Gastrocnemius medialis (tissue), 4 donors: ENCODE measurements at regions of chr11 and their contacts with region 1.

Region 1: GRCh38 chr11:76680518-76681425 is 10.2 kb upstream of the LRRC32 start:
- DNase-seq: peak in 1 of 2 donors; percentile 27
- ATAC-seq: peak in 1 of 2 donors; percentile 42
- H3K4me3 ChIP-seq: no peak overlapping the region
- H3K27ac ChIP-seq: no peak overlapping the region
- H3K4me1 ChIP-seq: no peaks in the 10 kb centered on the region
- H3K27me3 ChIP-seq: no peaks in the 10 kb centered on the region
- CTCF ChIP-seq: peak; percentile 41 to 81 (median 73)
- POLR2A ChIP-seq: no peak

Region 2: GRCh38 chr11:76491656-76492055 is 189.1 kb before region 1 on chr11:
- in situ Hi-C with region 1: no loop called
- intact Hi-C with region 1: no loop called
- DNase-seq: no peak
- ATAC-seq: no peak
- H3K4me3 ChIP-seq: no peak overlapping the region
- H3K27ac ChIP-seq: no peak overlapping the region
- H3K4me1 ChIP-seq: no peaks in the 10 kb centered on the region
- H3K27me3 ChIP-seq: no peaks in the 10 kb centered on the region
- CTCF ChIP-seq: no peak
- POLR2A ChIP-seq: no peak

Region 3: DNA sequence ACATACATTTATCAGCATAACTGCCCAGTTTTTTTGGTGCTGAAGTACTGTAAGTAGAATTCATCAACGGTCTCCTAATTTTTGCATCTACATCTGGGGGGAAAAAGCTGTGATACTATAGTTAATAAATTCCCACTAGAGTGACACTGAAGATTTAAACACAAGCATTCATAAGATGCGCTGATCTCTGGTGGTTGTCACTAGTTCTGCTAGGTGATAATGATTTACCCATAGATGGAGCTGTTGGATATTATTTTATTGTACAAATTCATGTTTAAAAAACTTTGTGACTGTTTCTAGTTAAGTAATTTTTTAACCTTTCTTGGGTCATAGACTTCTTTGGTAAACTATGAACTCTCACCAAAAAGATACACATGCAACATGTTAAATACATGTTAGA is 129.4 kb before region 1 on chr11:
- in situ Hi-C with region 1: loop called in 1 of 4 experiments (anchors 10 kb)
- intact Hi-C with region 1: loop called (anchors 5 kb)
- DNase-seq: no peak
- ATAC-seq: no peak
- H3K4me3 ChIP-seq: no peak overlapping the region
- H3K27ac ChIP-seq: no peak overlapping the region
- H3K4me1 ChIP-seq: no peaks in the 10 kb centered on the region
- H3K27me3 ChIP-seq: no peaks in the 10 kb centered on the region
- CTCF ChIP-seq: peak in 1 of 5 experiments; percentile 20
- POLR2A ChIP-seq: no peak

Region 4: DNA sequence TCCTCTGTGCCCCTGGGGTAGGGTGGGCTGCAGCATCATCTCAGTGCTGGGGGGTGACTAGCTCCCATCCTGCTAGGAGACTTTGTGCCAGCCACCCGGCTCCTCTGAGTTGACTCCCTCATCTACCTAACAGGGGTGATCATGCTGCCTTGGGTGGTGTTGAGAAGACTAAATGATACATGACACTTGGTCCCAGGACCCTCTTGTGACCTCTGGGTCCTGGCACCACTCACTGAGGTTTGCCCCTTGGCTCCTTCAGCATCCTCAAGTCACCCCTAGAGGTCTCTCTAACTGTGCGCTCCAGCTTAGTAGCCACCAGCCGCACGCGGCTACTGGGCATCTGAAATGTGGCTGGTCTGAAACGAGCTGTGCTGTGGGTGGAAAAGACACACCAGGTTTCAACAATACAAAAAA is 82.3 kb before region 1 on chr11:
- in situ Hi-C with region 1: loop called in 1 of 4 experiments (anchors 25 kb)
- intact Hi-C with region 1: loop called (anchors 5 kb)
- DNase-seq: no peak
- ATAC-seq: peak; percentile 18 to 58
- H3K4me3 ChIP-seq: no peak overlapping the region
- H3K27ac ChIP-seq: no peak overlapping the region
- H3K4me1 ChIP-seq: peaks cover 2 to 8% of the 10 kb centered on the region in 2 donors
- H3K27me3 ChIP-seq: no peaks in the 10 kb centered on the region
- CTCF ChIP-seq: peak in 2 of 5 experiments; percentile 48 to 50
- POLR2A ChIP-seq: no peak

Region 5: GRCh38 chr11:76615950-76616349 is 64.8 kb before region 1 on chr11:
- in situ Hi-C with region 1: no loop called
- intact Hi-C with region 1: no loop called
- DNase-seq: no peak
- ATAC-seq: peak; percentile 66 to 69
- H3K4me3 ChIP-seq: no peak overlapping the region
- H3K27ac ChIP-seq: peak overlapping the region; percentile 50 to 68 (median 60)
- H3K4me1 ChIP-seq: peaks cover 11 to 23% of the 10 kb centered on the region in 2 donors
- H3K27me3 ChIP-seq: no peaks in the 10 kb centered on the region
- CTCF ChIP-seq: no peak
- POLR2A ChIP-seq: peak in 1 of 2 donors; percentile 16

Region 6: GRCh38 chr11:76654298-76654851 is 26.4 kb before region 1 on chr11:
- in situ Hi-C with region 1: no loop called
- intact Hi-C with region 1: no loop called
- DNase-seq: peak in 1 of 2 donors; percentile 31
- ATAC-seq: peak; percentile 28 to 35
- H3K4me3 ChIP-seq: no peak overlapping the region
- H3K27ac ChIP-seq: peak overlapping the region; percentile 44 to 67 (median 65)
- H3K4me1 ChIP-seq: peaks cover 3 to 5% of the 10 kb centered on the region in 2 donors
- H3K27me3 ChIP-seq: no peaks in the 10 kb centered on the region
- CTCF ChIP-seq: no peak
- POLR2A ChIP-seq: no peak